Mammary epithelial cell (primary cell): ENCODE measurements at regions of chr2 and their contacts with region 1.

Region 1: GRCh38 chr2:218406209-218406948 is 6.7 kb downstream of the CTDSP1 start:
- DNase-seq: peak; percentile 92
- H3K4me3 ChIP-seq: peak overlapping the region; percentile 29 to 45 (median 33)
- H3K27ac ChIP-seq: peak overlapping the region; percentile 58
- H3K4me1 ChIP-seq: peaks cover 30% of the 10 kb centered on the region
- H3K27me3 ChIP-seq: no peaks in the 10 kb centered on the region
- CTCF ChIP-seq: peak; percentile 45 to 87

Region 2: GRCh38 chr2:218607436-218608115 is 201.2 kb after region 1 on chr2 and contains the start of gene PLCD4:
- CTCF ChIA-PET with region 1: no interaction called
- dilution Hi-C with region 1: no loop called
- in situ Hi-C with region 1: no loop called
- intact Hi-C with region 1: no loop called
- DNase-seq: peak; percentile 94
- H3K4me3 ChIP-seq: peak within 1 kb of the TSS; percentile 0 to 37 (median 33)
- H3K27ac ChIP-seq: peak within 1 kb of the TSS; percentile 47
- H3K4me1 ChIP-seq: peaks cover 18% of the 10 kb centered on the region
- H3K27me3 ChIP-seq: no peaks in the 10 kb centered on the region
- CTCF ChIP-seq: peak in 1 of 2 donors; percentile 16
- total RNA-seq, gene PLCD4: 1.8 to 5.4 TPM

Region 3: GRCh38 chr2:218618102-218618860 is 211.9 kb after region 1 on chr2:
- CTCF ChIA-PET with region 1: no interaction called
- dilution Hi-C with region 1: no loop called
- in situ Hi-C with region 1: no loop called
- intact Hi-C with region 1: loop called (anchors 1 kb)
- DNase-seq: no peak
- H3K4me3 ChIP-seq: no peak overlapping the region
- H3K27ac ChIP-seq: no peak overlapping the region
- H3K4me1 ChIP-seq: peaks cover 6% of the 10 kb centered on the region
- H3K27me3 ChIP-seq: no peaks in the 10 kb centered on the region
- CTCF ChIP-seq: peak; percentile 22 to 43